PC-9 (cell line): ENCODE measurements at regions of chr10 and their contacts with region 1.

Region 1: GRCh38 chr10:8520382-8520781 is 465.9 kb downstream of the GATA3 start:
- DNase-seq: no peak
- H3K4me3 ChIP-seq: no peak overlapping the region
- H3K27ac ChIP-seq: no peak overlapping the region
- H3K4me1 ChIP-seq: no peaks in the 10 kb centered on the region
- H3K27me3 ChIP-seq: no peaks in the 10 kb centered on the region
- CTCF ChIP-seq: no peak

Region 2: GRCh38 chr10:8416192-8416701 is 104.1 kb before region 1 on chr10:
- CTCF ChIA-PET with region 1: no interaction called
- POLR2A ChIA-PET with region 1: interaction called, 20 read pairs
- intact Hi-C with region 1: no loop called
- DNase-seq: no peak
- H3K4me3 ChIP-seq: no peak overlapping the region
- H3K27ac ChIP-seq: no peak overlapping the region
- H3K4me1 ChIP-seq: no peaks in the 10 kb centered on the region
- H3K27me3 ChIP-seq: no peaks in the 10 kb centered on the region
- CTCF ChIP-seq: no peak

Region 3: GRCh38 chr10:9075422-9075821 is 555.0 kb after region 1 on chr10:
- CTCF ChIA-PET with region 1: no interaction called
- POLR2A ChIA-PET with region 1: interaction called, 18 read pairs
- intact Hi-C with region 1: no loop called
- DNase-seq: no peak
- H3K4me3 ChIP-seq: no peak overlapping the region
- H3K27ac ChIP-seq: no peak overlapping the region
- H3K4me1 ChIP-seq: peaks cover 5% of the 10 kb centered on the region; the same call in 1 of the 2 replicates
- H3K27me3 ChIP-seq: no peaks in the 10 kb centered on the region
- CTCF ChIP-seq: no peak